CD4-positive, alpha-beta memory T cell (primary cell): ENCODE measurements at regions of chr6 and their contacts with region 1.

Region 1: GRCh38 chr6:11093589-11094410 is at the start of gene SMIM13:
- DNase-seq: peak; percentile 92 to 96 (median 92)
- H3K4me3 ChIP-seq: peak within 1 kb of the TSS; percentile 78 to 82
- H3K4me3 Mint-ChIP-seq: peak within 1 kb of the TSS; percentile 97 to 99 (median 98)
- H3K27ac ChIP-seq: peak within 1 kb of the TSS; percentile 93
- H3K27ac Mint-ChIP-seq: peak within 1 kb of the TSS; percentile 92 to 98 (median 98)
- H3K4me1 ChIP-seq: peaks cover 26% of the 10 kb centered on the region
- H3K4me1 Mint-ChIP-seq: peaks cover 26 to 38% (median 32%) of the 10 kb centered on the region in 4 donors
- H3K27me3 ChIP-seq: no peaks in the 10 kb centered on the region
- H3K27me3 Mint-ChIP-seq: no peaks in the 10 kb centered on the region
- total RNA-seq, gene SMIM13: 5.4 to 6.1 TPM

Region 2: DNA sequence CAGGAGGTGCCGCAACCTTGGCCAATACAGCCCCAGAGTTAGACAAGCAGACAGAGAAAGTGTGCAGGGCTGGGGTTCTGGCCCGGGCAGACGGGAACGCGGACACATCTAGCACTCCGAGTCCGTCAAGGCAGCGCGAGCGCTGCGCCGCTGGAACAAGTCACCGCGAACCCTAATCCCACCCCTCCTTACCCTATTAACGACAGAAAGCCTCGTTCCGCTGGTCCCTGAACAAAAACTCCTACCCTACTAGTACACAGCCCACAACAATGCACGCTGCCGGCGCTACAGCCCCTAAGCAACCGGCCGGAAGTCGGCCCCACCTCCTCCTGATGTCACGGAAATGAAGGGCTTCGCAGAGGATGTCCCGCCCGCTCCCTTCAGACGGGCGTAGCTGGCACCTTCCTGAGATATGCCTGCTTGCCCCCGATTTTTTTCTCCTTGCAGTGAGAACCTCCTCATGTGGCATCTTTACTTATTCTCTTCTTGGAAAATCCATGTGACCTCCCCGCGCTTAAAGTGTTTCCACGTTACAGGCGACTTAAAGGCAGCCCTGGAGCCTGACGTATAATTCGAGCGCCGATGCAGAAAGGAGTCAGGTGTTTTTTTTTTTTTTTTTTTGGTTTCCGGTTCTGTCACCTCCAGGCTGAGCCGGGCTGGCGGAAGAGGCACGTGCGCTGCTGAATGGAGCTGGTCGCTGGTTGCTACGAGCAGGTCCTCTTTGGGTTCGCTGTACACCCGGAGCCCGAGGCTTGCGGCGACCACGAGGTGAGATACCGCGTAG is 399.3 kb before region 1 on chr6 and contains the starts of genes C6orf52 and PAK1IP1:
- CTCF ChIA-PET with region 1: no interaction called
- POLR2A ChIA-PET with region 1: interaction called, 6 read pairs
- intact Hi-C with region 1: loop called (anchors 1 kb)
- DNase-seq: peak; percentile 96 to 97 (median 97)
- H3K4me3 ChIP-seq: peak within 1 kb of the TSS; percentile 45 to 88
- H3K4me3 Mint-ChIP-seq: peak within 1 kb of the TSS; percentile 93 to 100 (median 98)
- H3K27ac ChIP-seq: peak within 1 kb of the TSS; percentile 92
- H3K27ac Mint-ChIP-seq: peak within 1 kb of the TSS; percentile 100
- H3K4me1 ChIP-seq: peaks cover 34% of the 10 kb centered on the region
- H3K4me1 Mint-ChIP-seq: peaks cover 25 to 49% (median 34%) of the 10 kb centered on the region in 4 donors
- H3K27me3 ChIP-seq: no peaks in the 10 kb centered on the region
- H3K27me3 Mint-ChIP-seq: peaks cover 2 to 6% of the 10 kb centered on the region in 2 donors
- total RNA-seq, gene C6orf52: 1.2 to 1.5 TPM
- total RNA-seq, gene PAK1IP1: 7.2 to 7.4 TPM

Region 3: GRCh38 chr6:10837995-10838793 is 255.6 kb before region 1 on chr6 and contains the start of gene MAK:
- CTCF ChIA-PET with region 1: no interaction called
- POLR2A ChIA-PET with region 1: no interaction called
- intact Hi-C with region 1: loop called (anchors 5 kb)
- DNase-seq: peak; percentile 89 to 91 (median 90)
- H3K4me3 ChIP-seq: peak within 1 kb of the TSS; percentile 5 to 44
- H3K4me3 Mint-ChIP-seq: peak within 1 kb of the TSS; percentile 79 to 92 (median 84)
- H3K27ac ChIP-seq: peak within 1 kb of the TSS; percentile 22
- H3K27ac Mint-ChIP-seq: peak within 1 kb of the TSS; percentile 36 to 90 (median 82)
- H3K4me1 ChIP-seq: peaks cover 25% of the 10 kb centered on the region
- H3K4me1 Mint-ChIP-seq: peaks cover 7 to 26% (median 20%) of the 10 kb centered on the region in 4 donors
- H3K27me3 ChIP-seq: peaks cover 41% of the 10 kb centered on the region
- H3K27me3 Mint-ChIP-seq: peaks cover 37 to 51% of the 10 kb centered on the region in 2 donors
- total RNA-seq, gene MAK: not detected

Region 4: GRCh38 chr6:10939840-10940239 is 154.0 kb before region 1 on chr6:
- CTCF ChIA-PET with region 1: no interaction called
- POLR2A ChIA-PET with region 1: no interaction called
- intact Hi-C with region 1: no loop called
- DNase-seq: no peak
- H3K4me3 ChIP-seq: no peak overlapping the region
- H3K4me3 Mint-ChIP-seq: no peak overlapping the region
- H3K27ac ChIP-seq: no peak overlapping the region
- H3K27ac Mint-ChIP-seq: no peak overlapping the region
- H3K4me1 ChIP-seq: no peaks in the 10 kb centered on the region
- H3K4me1 Mint-ChIP-seq: no peaks in the 10 kb centered on the region
- H3K27me3 ChIP-seq: no peaks in the 10 kb centered on the region
- H3K27me3 Mint-ChIP-seq: peaks cover 0 to 4% of the 10 kb centered on the region in 2 donors

Region 5: DNA sequence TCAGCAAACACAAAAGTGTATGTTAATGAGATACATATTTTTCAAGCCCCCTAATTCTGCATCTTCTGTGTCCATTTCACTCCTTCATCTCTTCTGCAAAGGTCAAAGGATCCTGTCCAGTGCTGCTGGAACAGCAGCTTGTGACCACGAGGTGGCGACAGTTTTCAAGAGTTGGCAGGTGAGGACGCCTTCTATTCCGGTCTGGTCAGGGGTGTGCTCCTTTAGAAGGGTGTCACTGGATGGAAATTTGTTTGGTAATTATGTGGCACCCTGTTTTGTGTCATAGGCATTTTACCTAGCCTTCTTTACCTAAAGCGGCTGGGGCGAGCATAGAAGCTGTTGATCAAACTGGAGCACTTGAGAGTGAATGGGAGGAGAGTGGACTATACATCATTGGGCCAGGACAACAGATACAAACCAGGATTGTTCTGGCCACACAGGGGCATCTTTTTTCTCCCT is 50.6 kb after region 1 on chr6:
- CTCF ChIA-PET with region 1: no interaction called
- POLR2A ChIA-PET with region 1: no interaction called
- intact Hi-C with region 1: loop called (anchors 2 kb)
- DNase-seq: peak; percentile 54 to 68 (median 64)
- H3K4me3 ChIP-seq: no peak overlapping the region
- H3K4me3 Mint-ChIP-seq: no peak overlapping the region
- H3K27ac ChIP-seq: no peak overlapping the region
- H3K27ac Mint-ChIP-seq: no peak overlapping the region
- H3K4me1 ChIP-seq: no peaks in the 10 kb centered on the region
- H3K4me1 Mint-ChIP-seq: peaks cover 0 to 4% (median 0%) of the 10 kb centered on the region in 4 donors
- H3K27me3 ChIP-seq: no peaks in the 10 kb centered on the region
- H3K27me3 Mint-ChIP-seq: no peaks in the 10 kb centered on the region

Region 6: DNA sequence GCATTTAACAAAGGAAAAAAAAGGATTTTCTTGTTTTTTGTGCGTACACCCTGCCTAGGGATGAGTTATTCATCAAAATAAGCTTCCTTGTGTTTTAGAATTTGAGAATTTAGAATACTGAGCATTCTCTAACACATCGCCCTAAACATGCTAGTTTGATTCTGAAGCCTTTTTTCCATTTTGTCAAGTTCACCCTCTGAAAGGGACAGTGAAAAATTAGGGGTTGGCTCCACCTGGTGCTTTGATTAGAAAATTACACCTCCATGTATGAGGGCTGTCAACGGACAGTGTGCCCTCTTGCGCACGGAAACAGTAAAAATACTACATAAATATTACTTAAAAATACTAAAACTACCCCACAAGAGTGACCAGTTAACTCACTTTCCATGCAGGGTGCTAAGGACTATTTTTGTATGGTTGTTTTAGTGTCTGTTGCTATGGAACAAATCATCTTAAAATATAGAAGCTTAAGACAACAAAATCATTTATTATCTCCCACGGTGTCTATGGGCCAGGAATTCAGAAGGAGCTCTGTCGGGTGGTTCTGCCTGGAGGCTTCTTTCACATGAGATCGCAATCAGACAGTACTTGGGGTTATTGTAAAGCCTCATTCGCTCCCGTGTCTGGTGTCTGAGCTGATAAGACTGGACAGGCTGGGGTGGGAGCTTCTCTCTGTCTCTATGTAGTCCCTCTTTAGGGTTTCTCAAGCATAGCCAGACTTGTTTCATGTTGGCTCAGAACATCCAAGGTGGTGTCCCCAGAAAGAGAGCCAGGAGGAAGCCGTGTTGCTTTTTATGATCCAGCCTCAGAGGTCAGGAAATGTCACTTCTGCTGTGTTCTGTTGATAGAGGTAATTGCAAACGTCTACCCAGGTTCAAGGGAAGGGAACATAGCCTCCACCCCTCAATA is 402.6 kb after region 1 on chr6:
- CTCF ChIA-PET with region 1: interaction called, 6 read pairs
- POLR2A ChIA-PET with region 1: no interaction called
- intact Hi-C with region 1: loop called (anchors 1 kb)
- DNase-seq: peak; percentile 79 to 82 (median 80)
- H3K4me3 ChIP-seq: no peak overlapping the region
- H3K4me3 Mint-ChIP-seq: no peak overlapping the region
- H3K27ac ChIP-seq: no peak overlapping the region
- H3K27ac Mint-ChIP-seq: no peak overlapping the region
- H3K4me1 ChIP-seq: peaks cover 5% of the 10 kb centered on the region
- H3K4me1 Mint-ChIP-seq: peaks cover 0 to 1% (median 0%) of the 10 kb centered on the region in 4 donors
- H3K27me3 ChIP-seq: no peaks in the 10 kb centered on the region
- H3K27me3 Mint-ChIP-seq: no peaks in the 10 kb centered on the region

Region 7: DNA sequence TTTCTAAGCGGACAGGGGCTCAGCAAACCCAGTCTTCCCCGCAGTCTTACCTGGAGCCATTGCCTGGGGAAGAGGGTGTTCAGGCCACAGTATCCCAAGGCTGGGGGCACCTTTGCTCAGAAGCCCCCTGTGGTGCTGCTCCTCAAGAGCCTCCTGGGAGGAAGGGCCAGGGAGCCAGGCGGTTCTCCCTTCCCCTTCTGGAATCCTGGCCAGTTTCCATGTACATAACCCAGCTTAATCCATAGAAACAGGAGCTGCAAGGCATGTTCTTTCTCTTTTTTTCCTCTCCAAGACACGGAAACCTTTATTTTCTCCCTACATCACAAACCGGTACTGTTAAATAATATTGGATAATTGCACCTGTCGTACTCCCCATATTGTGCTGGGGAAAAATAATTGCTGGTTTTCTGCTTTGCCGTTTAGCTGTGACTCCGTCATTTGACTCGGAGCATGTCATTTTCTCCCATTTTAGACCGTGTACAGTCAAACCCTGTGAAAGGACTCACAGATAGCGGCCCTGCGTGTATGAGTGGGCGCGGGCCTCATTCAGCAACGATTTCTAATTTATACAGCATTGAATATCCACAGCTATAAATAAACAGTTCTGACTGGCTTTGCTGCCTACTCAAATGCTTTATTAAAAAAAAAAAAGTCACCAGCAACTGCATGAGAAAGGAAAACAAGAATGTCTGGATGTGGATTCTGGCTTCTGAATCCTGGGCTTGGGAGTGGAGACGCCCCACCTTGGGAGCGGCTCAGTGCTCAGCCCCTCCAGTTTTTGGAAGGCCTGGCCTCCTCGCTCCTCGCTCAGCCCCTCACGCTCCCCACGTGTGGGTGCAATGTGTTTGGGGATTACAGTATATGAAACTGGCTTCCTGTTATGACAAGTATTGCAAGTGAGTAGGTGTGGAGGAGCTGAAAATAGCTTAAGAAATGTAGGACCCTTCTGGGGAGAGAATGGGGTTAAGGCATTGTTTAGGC is 617.5 kb after region 1 on chr6:
- CTCF ChIA-PET with region 1: no interaction called
- POLR2A ChIA-PET with region 1: no interaction called
- intact Hi-C with region 1: loop called (anchors 5 kb)
- DNase-seq: peak in 1 of 5 donors; percentile 27
- H3K4me3 ChIP-seq: no peak overlapping the region
- H3K4me3 Mint-ChIP-seq: peak overlapping the region in 7 of 8 donors; percentile 14 to 85 (median 68)
- H3K27ac ChIP-seq: peak overlapping the region; percentile 39
- H3K27ac Mint-ChIP-seq: peak overlapping the region; percentile 89 to 98 (median 95)
- H3K4me1 ChIP-seq: peaks cover 65% of the 10 kb centered on the region
- H3K4me1 Mint-ChIP-seq: peaks cover 52 to 71% (median 63%) of the 10 kb centered on the region in 4 donors
- H3K27me3 ChIP-seq: no peaks in the 10 kb centered on the region
- H3K27me3 Mint-ChIP-seq: no peaks in the 10 kb centered on the region